ENCODE measurements at regions of chr10 and their contacts with region 1.

Region 1: GRCh38 chr10:23834070-23834469 is 374.9 kb upstream of the KIAA1217 start:
- DNase-seq: no peak
- H3K4me3 ChIP-seq: no peak overlapping the region
- CTCF ChIP-seq: no peak

Region 2: DNA sequence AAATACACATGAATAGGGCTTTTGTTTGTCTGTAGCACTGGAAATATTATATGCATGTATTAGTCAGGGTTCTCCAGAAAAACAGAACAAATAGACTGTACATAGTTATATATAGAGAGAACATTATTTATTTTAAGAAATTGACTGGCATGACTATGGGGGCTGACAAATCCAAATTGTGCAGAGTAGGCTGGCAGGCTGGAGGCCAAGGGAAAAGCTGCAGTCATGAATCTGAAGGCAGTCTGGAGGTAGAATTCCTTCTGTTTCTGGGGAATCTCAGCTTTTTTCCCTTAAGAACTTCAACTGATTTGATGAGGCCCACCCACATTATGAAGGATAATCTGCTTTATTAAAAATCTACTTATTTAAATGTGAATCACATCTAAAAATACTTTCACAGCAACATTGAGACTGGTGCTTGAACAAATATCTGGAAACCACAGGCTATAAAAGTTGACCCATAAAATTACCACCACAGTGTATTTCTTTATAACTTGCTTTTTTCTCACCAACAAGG is 30.6 kb after region 1 on chr10:
- in situ Hi-C with region 1: no loop called
- DNase-seq: no peak
- H3K4me3 ChIP-seq: no peak overlapping the region
- CTCF ChIP-seq: no peak

Region 3: GRCh38 chr10:23877791-23878320 is 43.8 kb after region 1 on chr10:
- in situ Hi-C with region 1: loop called (anchors 5 kb)
- DNase-seq: no peak
- H3K4me3 ChIP-seq: no peak overlapping the region
- CTCF ChIP-seq: no peak

Region 4: DNA sequence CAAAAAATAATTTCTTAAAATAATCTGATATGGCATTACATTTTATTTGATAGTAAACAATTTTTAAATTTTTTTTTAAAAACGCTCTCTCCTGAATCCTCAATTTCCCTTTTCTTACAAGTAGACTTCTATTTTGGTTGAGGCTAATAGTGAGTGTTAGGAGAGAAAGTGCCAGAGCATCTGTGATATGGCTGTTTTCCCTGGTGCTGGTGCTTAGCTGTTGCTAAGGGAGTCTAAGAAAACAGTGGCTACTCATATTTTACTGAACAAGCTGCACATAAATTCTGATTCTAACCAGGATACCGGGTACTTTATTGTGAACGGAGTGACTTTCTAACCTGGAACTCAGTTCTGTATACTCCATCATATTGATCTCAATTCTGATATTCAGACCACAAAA is 63.8 kb after region 1 on chr10:
- in situ Hi-C with region 1: loop called (anchors 5 kb)
- DNase-seq: no peak
- H3K4me3 ChIP-seq: no peak overlapping the region
- CTCF ChIP-seq: no peak

Measured in astrocyte of the cerebellum (primary cell).